Heart right ventricle (tissue), 16 donors: ENCODE measurements at regions of chr18 and their contacts with region 1.

Region 1: GRCh38 chr18:75773618-75774017 is 346.1 kb upstream of the SMIM21 start:
- DNase-seq: no peak
- ATAC-seq: no peak
- H3K4me3 ChIP-seq: no peak overlapping the region
- H3K27ac ChIP-seq: no peak overlapping the region
- H3K4me1 ChIP-seq: no peaks in the 10 kb centered on the region
- H3K27me3 ChIP-seq: peaks cover 0 to 27% (median 0%) of the 10 kb centered on the region in 7 donors
- CTCF ChIP-seq: no peak

Region 2: DNA sequence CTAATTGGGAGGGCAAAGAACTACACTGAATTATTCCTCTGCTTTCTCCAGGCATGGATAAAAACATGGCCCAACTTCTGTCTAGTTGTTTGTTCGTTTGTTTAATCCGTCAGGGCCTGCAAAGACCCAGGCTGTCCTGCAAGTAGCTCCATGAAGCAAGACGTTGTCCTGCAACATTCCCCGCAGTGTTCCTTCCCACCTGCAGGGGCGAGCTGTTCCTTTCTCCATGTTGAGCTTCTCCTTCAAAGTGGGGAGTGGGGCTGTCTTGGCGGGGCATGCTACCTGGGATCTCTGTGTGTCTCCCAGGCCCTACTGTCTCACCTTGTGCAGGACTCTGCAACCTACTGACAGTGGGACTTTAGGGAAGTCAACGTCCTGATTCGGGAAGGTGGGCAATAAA is 82.1 kb before region 1 on chr18:
- intact Hi-C with region 1: loop called in 1 of 10 experiments (anchors 10 kb)
- DNase-seq: no peak
- ATAC-seq: no peak
- H3K4me3 ChIP-seq: no peak overlapping the region
- H3K27ac ChIP-seq: no peak overlapping the region
- H3K4me1 ChIP-seq: no peaks in the 10 kb centered on the region
- H3K27me3 ChIP-seq: peaks cover 0 to 4% (median 0%) of the 10 kb centered on the region in 7 donors
- CTCF ChIP-seq: no peak

Region 3: DNA sequence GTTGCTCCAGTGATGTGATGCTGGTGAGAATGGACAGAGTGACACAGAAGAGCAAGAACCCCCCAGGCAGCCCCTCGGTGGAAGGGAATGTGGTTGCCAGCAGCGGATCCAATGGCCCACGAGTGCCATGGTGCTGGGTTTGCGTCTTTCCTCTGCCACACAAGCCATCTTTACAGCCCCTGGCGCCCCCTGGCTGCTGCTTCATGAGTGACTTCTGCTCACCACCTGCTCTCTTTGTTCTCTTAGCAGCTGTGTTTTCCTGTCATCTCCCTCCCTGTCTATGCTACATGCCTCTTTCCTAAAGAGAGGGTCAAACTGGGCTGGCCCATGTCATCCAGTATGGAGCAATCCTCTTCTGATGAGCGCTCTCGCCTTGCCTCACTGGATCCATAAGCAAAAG is 46.2 kb before region 1 on chr18:
- intact Hi-C with region 1: no loop called
- DNase-seq: peak; percentile 33 to 36
- ATAC-seq: peak in 3 of 8 donors; percentile 12 to 47 (median 41)
- H3K4me3 ChIP-seq: no peak overlapping the region
- H3K27ac ChIP-seq: no peak overlapping the region
- H3K4me1 ChIP-seq: no peaks in the 10 kb centered on the region
- H3K27me3 ChIP-seq: peaks cover 0 to 29% (median 0%) of the 10 kb centered on the region in 7 donors
- CTCF ChIP-seq: peak in 8 of 9 donors; percentile 28 to 64 (median 54)

Region 4: GRCh38 chr18:75752740-75753263 is 20.8 kb before region 1 on chr18:
- intact Hi-C with region 1: no loop called
- DNase-seq: no peak
- ATAC-seq: no peak
- H3K4me3 ChIP-seq: no peak overlapping the region
- H3K27ac ChIP-seq: no peak overlapping the region
- H3K4me1 ChIP-seq: no peaks in the 10 kb centered on the region
- H3K27me3 ChIP-seq: peaks cover 0 to 6% (median 0%) of the 10 kb centered on the region in 7 donors
- CTCF ChIP-seq: no peak